ENCODE measurements at regions of chr10 and their contacts with region 1.

Region 1: DNA sequence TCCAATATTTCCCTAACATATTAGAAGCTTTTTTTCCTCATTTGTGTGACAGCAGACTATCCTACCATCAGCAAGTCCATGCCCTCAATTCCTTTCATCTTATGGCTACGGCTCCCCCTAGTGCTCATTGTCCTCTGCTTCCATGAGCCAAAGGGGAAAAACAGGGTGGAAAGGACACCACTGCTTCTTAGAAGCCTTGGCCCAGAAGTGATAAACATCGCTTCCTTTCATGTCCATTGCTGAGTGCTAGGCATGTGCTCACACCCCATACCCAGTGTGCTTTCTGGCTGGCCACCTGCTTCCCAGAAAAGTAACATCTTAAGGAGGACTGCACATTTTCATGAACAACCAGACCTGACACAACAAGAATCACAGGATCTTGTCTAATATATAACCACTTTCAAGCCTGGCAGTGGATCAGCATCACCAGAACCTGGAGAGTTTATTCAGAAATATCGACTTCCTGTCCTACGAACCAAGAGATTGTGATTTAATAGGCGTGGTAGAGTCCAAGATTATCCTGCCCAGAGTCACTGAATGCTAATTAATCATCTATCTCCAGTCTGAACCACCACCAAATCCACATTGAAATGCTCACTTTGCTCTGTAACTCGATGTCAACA is 650.5 kb upstream of the SORCS1 start:
- DNase-seq: peak; percentile 75
- H3K4me3 ChIP-seq: no peak overlapping the region
- H3K27ac ChIP-seq: no peak overlapping the region
- H3K4me1 ChIP-seq: no peaks in the 10 kb centered on the region
- H3K27me3 ChIP-seq: no peaks in the 10 kb centered on the region
- CTCF ChIP-seq: peak; percentile 33 to 57 (median 46)
- EP300 ChIP-seq: no peak
- POLR2A ChIP-seq: no peak

Region 2: GRCh38 chr10:106625751-106626150 is 1189.2 kb before region 1 on chr10:
- intact Hi-C with region 1: loop called (anchors 10 kb)
- DNase-seq: no peak
- H3K4me3 ChIP-seq: no peak overlapping the region
- H3K27ac ChIP-seq: no peak overlapping the region
- H3K4me1 ChIP-seq: no peaks in the 10 kb centered on the region
- H3K27me3 ChIP-seq: no peaks in the 10 kb centered on the region
- CTCF ChIP-seq: no peak
- EP300 ChIP-seq: no peak
- POLR2A ChIP-seq: no peak

Region 3: GRCh38 chr10:106705681-106706100 is 1109.3 kb before region 1 on chr10:
- intact Hi-C with region 1: loop called (anchors 5 kb)
- DNase-seq: peak; percentile 81
- H3K4me3 ChIP-seq: no peak overlapping the region
- H3K27ac ChIP-seq: no peak overlapping the region
- H3K4me1 ChIP-seq: peaks cover 0 to 3% (median 0%) of the 10 kb centered on the region in 4 donors
- H3K27me3 ChIP-seq: no peaks in the 10 kb centered on the region
- CTCF ChIP-seq: peak; percentile 25 to 73 (median 61)
- EP300 ChIP-seq: no peak
- POLR2A ChIP-seq: no peak

Region 4: GRCh38 chr10:106795619-106796018 is 1019.4 kb before region 1 on chr10:
- intact Hi-C with region 1: loop called (anchors 5 kb)
- DNase-seq: peak; percentile 77
- H3K4me3 ChIP-seq: no peak overlapping the region
- H3K27ac ChIP-seq: no peak overlapping the region
- H3K4me1 ChIP-seq: peaks cover 0 to 15% (median 0%) of the 10 kb centered on the region in 4 donors
- H3K27me3 ChIP-seq: no peaks in the 10 kb centered on the region
- CTCF ChIP-seq: peak; percentile 34 to 65 (median 52)
- EP300 ChIP-seq: no peak
- POLR2A ChIP-seq: no peak

Region 5: DNA sequence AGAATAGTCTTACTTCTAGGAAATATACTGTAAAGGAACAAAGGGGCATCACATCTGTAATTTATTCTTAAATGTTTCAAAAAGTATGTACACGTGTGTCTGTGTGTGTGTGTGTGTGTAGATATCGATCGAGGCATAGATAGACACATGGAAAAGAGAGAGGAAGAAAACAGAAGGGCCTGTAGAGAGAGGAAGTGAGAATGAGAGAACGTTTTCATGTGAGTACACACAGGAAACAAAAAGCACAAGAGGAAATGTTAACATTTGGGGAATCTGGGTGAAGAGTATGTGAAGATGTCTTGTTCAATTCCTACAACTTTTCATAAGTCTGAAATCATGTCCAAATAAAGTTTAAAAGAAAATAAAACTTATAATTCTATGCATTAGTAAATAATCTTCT is 363.9 kb before region 1 on chr10:
- intact Hi-C with region 1: no loop called
- DNase-seq: no peak
- H3K4me3 ChIP-seq: no peak overlapping the region
- H3K27ac ChIP-seq: no peak overlapping the region
- H3K4me1 ChIP-seq: no peaks in the 10 kb centered on the region
- H3K27me3 ChIP-seq: no peaks in the 10 kb centered on the region
- CTCF ChIP-seq: no peak
- EP300 ChIP-seq: no peak
- POLR2A ChIP-seq: no peak

Region 6: GRCh38 chr10:107767185-107767584 is 47.8 kb before region 1 on chr10:
- intact Hi-C with region 1: no loop called
- DNase-seq: no peak
- H3K4me3 ChIP-seq: no peak overlapping the region
- H3K27ac ChIP-seq: no peak overlapping the region
- H3K4me1 ChIP-seq: no peaks in the 10 kb centered on the region
- H3K27me3 ChIP-seq: no peaks in the 10 kb centered on the region
- CTCF ChIP-seq: no peak
- EP300 ChIP-seq: no peak
- POLR2A ChIP-seq: no peak

Region 7: GRCh38 chr10:108147346-108147745 is 332.4 kb after region 1 on chr10:
- intact Hi-C with region 1: no loop called
- DNase-seq: no peak
- H3K4me3 ChIP-seq: no peak overlapping the region
- H3K27ac ChIP-seq: no peak overlapping the region
- H3K4me1 ChIP-seq: no peaks in the 10 kb centered on the region
- H3K27me3 ChIP-seq: no peaks in the 10 kb centered on the region
- CTCF ChIP-seq: no peak
- EP300 ChIP-seq: no peak
- POLR2A ChIP-seq: no peak

Region 8: DNA sequence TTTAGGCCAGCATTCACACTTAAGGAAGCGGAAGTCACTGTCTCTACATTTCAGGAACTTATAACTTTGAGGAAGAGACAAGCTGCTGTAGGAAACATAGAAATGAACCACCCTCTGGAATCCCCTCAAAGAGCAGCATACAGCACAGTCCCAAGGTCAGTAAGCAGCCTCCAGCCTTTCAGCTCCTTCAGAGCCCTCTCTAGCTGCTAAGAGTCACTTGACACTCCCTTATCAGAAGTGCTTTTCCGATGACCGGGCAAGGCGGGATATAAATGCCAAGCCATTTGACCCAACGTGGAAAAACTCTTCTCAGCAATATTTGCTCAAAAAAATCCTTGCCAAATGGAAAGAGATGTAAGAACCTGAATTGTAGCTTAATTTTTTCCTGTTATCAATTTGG is 824.0 kb after region 1 on chr10:
- intact Hi-C with region 1: no loop called
- DNase-seq: no peak
- H3K4me3 ChIP-seq: no peak overlapping the region
- H3K27ac ChIP-seq: no peak overlapping the region
- H3K4me1 ChIP-seq: no peaks in the 10 kb centered on the region
- H3K27me3 ChIP-seq: no peaks in the 10 kb centered on the region
- CTCF ChIP-seq: no peak
- EP300 ChIP-seq: no peak
- POLR2A ChIP-seq: no peak

Measured in sigmoid colon (tissue), 7 donors.